Esophagus muscularis mucosa (tissue), 4 donors: ENCODE measurements at regions of chr12 and their contacts with region 1.

Region 1: DNA sequence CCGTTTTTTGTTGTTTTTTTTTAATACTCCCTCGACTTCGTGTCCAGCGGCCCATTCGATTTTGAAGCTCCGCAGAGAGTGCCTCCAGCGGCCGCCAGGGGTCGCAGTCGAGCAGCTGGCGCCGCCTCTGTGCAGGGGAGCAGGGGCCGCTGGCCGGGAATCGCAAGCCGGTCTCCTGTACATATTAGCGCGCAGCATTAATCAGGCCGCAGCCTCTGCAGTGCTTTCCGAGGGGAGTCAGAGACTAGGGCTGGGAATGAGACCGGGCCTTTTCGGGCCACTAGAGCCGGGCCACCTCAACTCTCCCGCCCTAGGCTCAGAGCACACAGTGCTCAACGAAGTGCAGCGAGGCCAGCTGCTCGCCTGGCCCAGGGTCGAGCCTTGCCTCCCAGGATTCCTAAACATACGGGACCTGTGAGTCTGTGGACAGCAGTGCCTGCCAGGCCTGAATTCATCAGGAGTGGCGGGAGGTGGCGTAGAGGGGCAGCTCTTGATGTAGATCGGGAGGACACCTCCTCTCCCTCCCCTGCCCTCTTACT is 81.8 kb downstream of the EMP1 start:
- DNase-seq: no peak
- H3K4me3 ChIP-seq: peak overlapping the region; percentile 11 to 38 (median 20)
- H3K27ac ChIP-seq: no peak overlapping the region
- H3K4me1 ChIP-seq: peaks cover 2 to 14% (median 9%) of the 10 kb centered on the region in 4 donors
- H3K27me3 ChIP-seq: peaks cover 0 to 10% (median 0%) of the 10 kb centered on the region in 4 donors
- CTCF ChIP-seq: peak in 2 of 3 experiments; percentile 87 to 96
- EP300 ChIP-seq: no peak
- POLR2A ChIP-seq: no peak

Region 2: GRCh38 chr12:13534645-13535398 is 256.5 kb after region 1 on chr12:
- intact Hi-C with region 1: loop called (anchors 10 kb)
- DNase-seq: no peak
- H3K4me3 ChIP-seq: peak overlapping the region in 2 of 4 donors; percentile 14 to 17
- H3K27ac ChIP-seq: no peak overlapping the region
- H3K4me1 ChIP-seq: no peaks in the 10 kb centered on the region
- H3K27me3 ChIP-seq: no peaks in the 10 kb centered on the region
- CTCF ChIP-seq: peak; percentile 43 to 76 (median 72)
- EP300 ChIP-seq: no peak
- POLR2A ChIP-seq: no peak

Region 3: GRCh38 chr12:13661005-13661887 is 382.9 kb after region 1 on chr12:
- intact Hi-C with region 1: loop called (anchors 2 kb)
- DNase-seq: no peak
- H3K4me3 ChIP-seq: no peak overlapping the region
- H3K27ac ChIP-seq: no peak overlapping the region
- H3K4me1 ChIP-seq: no peaks in the 10 kb centered on the region
- H3K27me3 ChIP-seq: no peaks in the 10 kb centered on the region
- CTCF ChIP-seq: peak; percentile 61 to 85 (median 65)
- EP300 ChIP-seq: no peak
- POLR2A ChIP-seq: no peak

Region 4: DNA sequence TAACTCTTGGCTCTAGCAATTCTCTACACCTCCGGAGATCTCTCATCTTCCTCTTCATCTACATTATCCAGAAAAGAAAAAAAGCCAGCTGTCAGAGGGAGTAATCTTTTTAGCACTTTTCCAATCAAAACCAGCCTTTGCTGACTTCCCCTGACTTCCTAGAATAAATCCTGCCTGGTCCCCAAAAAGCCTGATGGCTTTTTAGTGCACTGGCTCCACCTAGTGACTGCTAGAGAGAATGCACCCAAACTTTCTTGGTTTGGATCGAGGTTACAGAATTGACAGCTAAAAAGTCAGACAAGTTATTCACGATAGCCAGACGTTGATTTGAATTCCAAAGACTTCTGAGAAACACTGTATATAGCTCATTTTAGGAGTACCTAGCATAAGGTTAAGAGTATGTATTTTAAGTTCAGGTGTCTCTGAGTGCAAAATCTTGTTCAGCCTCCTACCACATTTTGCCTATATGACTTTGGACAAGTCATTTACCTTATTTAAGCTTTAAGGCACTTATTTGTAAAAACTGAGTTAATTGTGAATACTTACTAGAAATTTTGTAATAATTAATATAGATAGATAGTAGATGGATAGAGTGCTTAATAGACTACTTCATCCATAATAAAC is 888.8 kb after region 1 on chr12:
- intact Hi-C with region 1: loop called (anchors 5 kb)
- DNase-seq: no peak
- H3K4me3 ChIP-seq: no peak overlapping the region
- H3K27ac ChIP-seq: no peak overlapping the region
- H3K4me1 ChIP-seq: no peaks in the 10 kb centered on the region
- H3K27me3 ChIP-seq: peaks cover 0 to 7% (median 0%) of the 10 kb centered on the region in 4 donors
- CTCF ChIP-seq: peak; percentile 79 to 91 (median 87)
- EP300 ChIP-seq: no peak
- POLR2A ChIP-seq: no peak